PC-3 (cell line): ENCODE measurements at regions of chr11 and their contacts with region 1.

Region 1: DNA sequence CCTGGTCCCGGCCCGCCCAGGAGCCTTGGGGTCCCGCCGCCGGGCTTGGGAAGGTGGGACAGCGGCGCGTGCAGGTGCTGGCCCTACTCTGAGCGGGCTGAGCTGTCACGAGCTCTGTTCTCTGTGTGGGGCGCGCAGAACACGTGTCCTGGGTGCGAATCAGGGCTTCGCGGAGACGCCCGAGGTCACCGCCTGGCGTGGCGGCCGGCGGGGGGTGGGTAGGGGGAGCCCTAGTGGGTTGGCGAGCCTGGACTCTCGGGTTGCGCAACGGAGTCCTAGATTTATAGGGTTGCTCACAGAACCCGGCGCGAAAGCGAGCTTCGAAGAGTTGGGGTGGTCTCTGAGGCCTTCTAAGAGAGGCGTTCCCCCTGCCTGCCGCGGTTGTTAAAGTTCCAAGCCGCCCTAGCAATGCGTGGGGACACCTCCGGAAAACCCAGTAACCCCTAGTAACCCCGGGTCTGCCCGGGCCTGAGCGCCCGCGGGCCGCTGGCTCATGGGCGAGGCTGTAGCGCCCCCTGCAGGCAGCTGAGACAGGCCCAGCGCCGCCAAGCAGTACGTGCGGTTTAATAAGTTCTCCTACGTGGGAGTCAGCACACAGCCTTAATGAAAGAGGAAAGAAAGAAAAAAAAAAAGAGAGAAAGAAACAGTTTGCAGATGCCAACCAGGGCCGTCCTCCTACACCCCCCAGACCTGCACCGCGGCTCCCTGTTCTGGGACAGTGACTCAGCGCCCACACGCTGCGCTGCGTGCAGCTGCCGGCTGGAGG is 2.8 kb downstream of the ADM start:
- DNase-seq: peak; percentile 86
- ATAC-seq: peak; percentile 21
- H3K4me3 ChIP-seq: peak overlapping the region; percentile 93
- H3K27ac ChIP-seq: peak overlapping the region; percentile 89
- H3K4me1 ChIP-seq: peaks cover 21% of the 10 kb centered on the region
- H3K27me3 ChIP-seq: no peaks in the 10 kb centered on the region
- CTCF ChIP-seq: peak; percentile 98

Region 2: GRCh38 chr11:9757809-9758636 is 549.6 kb before region 1 on chr11:
- CTCF ChIA-PET with region 1: no interaction called
- POLR2A ChIA-PET with region 1: no interaction called
- intact Hi-C with region 1: loop called (anchors 1 kb)
- DNase-seq: peak; percentile 76
- ATAC-seq: peak; percentile 39
- H3K4me3 ChIP-seq: peak overlapping the region; percentile 87
- H3K27ac ChIP-seq: peak overlapping the region; percentile 17; the same call in 1 of the 2 replicates
- H3K4me1 ChIP-seq: peaks cover 42% of the 10 kb centered on the region
- H3K27me3 ChIP-seq: no peaks in the 10 kb centered on the region
- CTCF ChIP-seq: peak; percentile 66

Region 3: DNA sequence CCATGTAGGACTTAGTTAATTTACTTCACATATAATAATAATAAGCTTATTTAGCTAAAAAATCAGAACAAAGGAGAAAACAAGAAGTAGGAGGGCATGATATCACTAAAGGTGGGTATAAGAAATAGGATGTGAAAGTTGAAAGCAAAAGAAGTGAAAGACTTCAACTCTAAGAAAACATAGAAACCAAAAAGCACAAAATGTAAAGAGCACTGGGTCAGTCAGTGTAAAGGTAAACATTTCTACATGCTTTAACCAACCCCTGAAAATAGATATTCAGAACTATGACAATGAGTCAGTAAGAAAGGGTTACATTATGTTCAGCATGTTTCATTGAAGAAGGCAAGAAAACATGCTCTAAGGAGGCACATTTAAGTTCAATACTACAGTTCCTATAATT is 344.9 kb before region 1 on chr11:
- CTCF ChIA-PET with region 1: no interaction called
- POLR2A ChIA-PET with region 1: no interaction called
- intact Hi-C with region 1: no loop called
- DNase-seq: no peak
- ATAC-seq: no peak
- H3K4me3 ChIP-seq: no peak overlapping the region
- H3K27ac ChIP-seq: no peak overlapping the region
- H3K4me1 ChIP-seq: no peaks in the 10 kb centered on the region
- H3K27me3 ChIP-seq: no peaks in the 10 kb centered on the region
- CTCF ChIP-seq: no peak

Region 4: DNA sequence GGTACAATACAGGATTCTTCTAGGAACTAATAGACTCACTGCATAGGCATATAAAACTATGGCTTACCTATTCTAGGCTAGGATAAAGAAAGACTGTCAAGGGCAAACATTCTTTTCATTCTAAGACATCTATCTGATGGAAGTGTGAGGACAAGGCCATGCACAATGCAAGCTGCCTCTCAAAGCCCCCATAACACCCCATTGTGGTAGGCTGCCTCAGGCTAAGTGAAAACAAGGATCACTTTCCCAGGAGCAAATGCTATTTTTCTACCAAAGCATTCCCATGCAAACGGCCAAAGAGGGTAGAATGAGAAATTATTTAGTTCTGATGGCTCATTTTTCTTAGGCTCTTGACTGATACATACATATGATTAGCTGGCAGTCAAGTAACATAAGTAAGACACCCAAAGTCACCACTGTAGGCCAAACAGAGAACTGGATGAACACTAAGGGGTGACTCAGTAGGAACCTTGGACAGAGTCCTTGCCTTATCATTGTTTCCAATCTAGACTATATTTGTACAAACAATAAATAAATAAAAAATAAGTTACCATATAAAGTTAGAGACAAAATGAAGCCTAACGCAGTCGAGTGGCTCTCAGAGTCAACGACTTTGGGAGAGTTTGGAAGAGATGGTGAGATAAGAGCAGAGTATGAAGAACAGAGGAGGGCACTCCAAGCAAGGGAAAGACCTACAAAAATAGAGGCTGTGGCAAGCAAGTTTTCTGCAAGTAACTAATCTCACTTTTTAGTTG is 317.2 kb before region 1 on chr11:
- CTCF ChIA-PET with region 1: interaction called, 5 read pairs
- POLR2A ChIA-PET with region 1: interaction called, 4 read pairs
- intact Hi-C with region 1: loop called (anchors 1 kb)
- DNase-seq: peak; percentile 71
- ATAC-seq: peak; percentile 98
- H3K4me3 ChIP-seq: no peak overlapping the region
- H3K27ac ChIP-seq: 0 out of 2 replicates have a peak overlapping the region, but pooled peaks have one; percentile 5
- H3K4me1 ChIP-seq: peaks cover 14% of the 10 kb centered on the region
- H3K27me3 ChIP-seq: no peaks in the 10 kb centered on the region
- CTCF ChIP-seq: peak; percentile 45

Region 5: GRCh38 chr11:10116588-10116987 is 191.0 kb before region 1 on chr11:
- CTCF ChIA-PET with region 1: no interaction called
- POLR2A ChIA-PET with region 1: interaction called, 19 read pairs
- intact Hi-C with region 1: no loop called
- DNase-seq: no peak
- ATAC-seq: no peak
- H3K4me3 ChIP-seq: no peak overlapping the region
- H3K27ac ChIP-seq: no peak overlapping the region
- H3K4me1 ChIP-seq: peaks cover 12% of the 10 kb centered on the region; the same call in 1 of the 2 replicates
- H3K27me3 ChIP-seq: no peaks in the 10 kb centered on the region
- CTCF ChIP-seq: no peak

Region 6: DNA sequence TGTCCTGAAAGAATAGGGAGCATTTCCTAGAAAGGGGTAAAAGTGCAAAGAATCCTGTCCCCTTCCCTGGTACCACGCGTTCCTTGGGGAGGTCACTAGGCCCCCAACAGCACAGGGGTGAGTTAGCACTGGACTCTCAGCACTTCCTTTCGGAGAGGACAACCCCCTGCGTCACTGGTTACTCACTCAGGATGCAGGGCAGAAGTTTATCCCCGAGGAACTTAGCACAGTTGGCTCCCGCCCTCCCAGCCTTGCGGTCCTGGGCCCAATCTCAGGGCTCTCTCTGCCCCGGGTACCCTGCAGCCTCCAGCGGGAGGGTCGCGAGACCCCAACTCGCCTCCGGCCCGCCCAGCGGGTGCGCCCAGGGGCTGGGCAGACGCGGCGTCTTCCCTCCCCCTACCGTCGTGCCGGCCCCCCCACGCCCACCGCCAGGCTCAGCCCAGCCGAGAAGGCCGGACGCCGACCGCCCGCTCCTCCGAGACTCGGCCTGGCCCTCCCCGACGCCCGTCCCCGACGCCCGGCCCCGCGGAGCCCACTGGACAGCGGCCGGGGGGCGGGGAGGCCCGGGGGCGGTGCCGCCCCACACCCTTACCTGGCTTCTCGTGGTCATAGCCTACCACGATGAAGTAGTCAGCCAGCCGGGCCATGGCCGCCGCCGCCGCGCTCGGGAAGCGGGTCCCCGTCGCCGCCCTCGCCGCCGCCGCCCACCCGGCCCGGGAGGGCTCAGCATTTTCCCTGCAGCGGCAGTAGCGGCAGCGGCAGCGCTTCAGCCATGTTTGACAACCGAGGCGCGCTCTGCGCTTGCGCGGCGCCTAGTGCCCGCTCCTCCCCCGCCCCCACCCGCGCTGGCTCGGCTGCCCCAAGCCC is 14.0 kb before region 1 on chr11 and contains the start of gene SBF2:
- CTCF ChIA-PET with region 1: no interaction called
- POLR2A ChIA-PET with region 1: interaction called, 19 read pairs
- intact Hi-C with region 1: loop called (anchors 1 kb)
- DNase-seq: peak; percentile 89
- ATAC-seq: peak; percentile 88
- H3K4me3 ChIP-seq: peak within 1 kb of the TSS; percentile 88
- H3K27ac ChIP-seq: peak within 1 kb of the TSS; percentile 92
- H3K4me1 ChIP-seq: peaks cover 32% of the 10 kb centered on the region
- H3K27me3 ChIP-seq: no peaks in the 10 kb centered on the region
- CTCF ChIP-seq: no peak
- total RNA-seq, gene SBF2: 30.3 and 31.3 TPM in 2 replicates

Region 7: DNA sequence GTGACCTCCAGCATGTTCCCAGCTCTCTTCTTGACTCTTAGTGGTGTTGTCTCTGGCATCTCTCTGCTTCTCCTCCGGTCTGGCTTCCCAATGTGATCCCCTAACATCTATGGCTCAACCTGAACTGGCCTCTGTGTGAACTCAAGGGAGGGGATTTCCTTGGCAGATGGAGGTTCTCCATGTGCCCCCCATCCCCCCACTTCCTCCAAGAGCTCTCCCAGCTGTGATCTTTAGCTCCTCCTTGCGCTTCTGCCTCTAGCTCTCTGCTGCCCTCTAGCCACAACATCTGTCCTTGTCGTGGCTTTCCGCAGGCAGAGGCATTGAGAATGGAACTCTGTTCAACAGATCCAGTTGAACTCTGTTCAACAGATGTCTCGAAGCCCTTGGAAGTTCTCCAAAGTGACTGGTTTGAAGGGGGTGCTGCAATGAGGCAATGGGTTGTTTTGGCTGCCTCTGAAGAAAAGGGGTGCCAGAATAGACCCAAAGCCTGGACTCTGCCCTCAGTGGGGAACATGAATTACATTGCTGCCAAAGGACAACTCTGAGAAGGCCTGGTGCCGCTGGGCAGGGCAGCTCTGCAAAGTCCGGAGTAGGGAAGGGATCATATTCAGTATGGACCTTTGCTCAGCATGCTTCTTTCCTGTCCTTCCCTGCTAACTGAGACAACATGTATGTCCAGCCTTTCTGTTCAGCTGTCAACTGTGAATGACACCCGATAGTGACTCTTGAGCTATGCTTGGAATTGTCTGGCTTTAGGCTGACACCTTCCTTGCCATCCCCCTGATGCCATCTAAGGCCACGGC is 59.1 kb after region 1 on chr11:
- CTCF ChIA-PET with region 1: interaction called, 5 read pairs
- POLR2A ChIA-PET with region 1: no interaction called
- intact Hi-C with region 1: loop called (anchors 5 kb)
- DNase-seq: peak; percentile 85
- ATAC-seq: peak; percentile 87
- H3K4me3 ChIP-seq: no peak overlapping the region
- H3K27ac ChIP-seq: no peak overlapping the region
- H3K4me1 ChIP-seq: peaks cover 6% of the 10 kb centered on the region
- H3K27me3 ChIP-seq: no peaks in the 10 kb centered on the region
- CTCF ChIP-seq: peak; percentile 88

Region 8: DNA sequence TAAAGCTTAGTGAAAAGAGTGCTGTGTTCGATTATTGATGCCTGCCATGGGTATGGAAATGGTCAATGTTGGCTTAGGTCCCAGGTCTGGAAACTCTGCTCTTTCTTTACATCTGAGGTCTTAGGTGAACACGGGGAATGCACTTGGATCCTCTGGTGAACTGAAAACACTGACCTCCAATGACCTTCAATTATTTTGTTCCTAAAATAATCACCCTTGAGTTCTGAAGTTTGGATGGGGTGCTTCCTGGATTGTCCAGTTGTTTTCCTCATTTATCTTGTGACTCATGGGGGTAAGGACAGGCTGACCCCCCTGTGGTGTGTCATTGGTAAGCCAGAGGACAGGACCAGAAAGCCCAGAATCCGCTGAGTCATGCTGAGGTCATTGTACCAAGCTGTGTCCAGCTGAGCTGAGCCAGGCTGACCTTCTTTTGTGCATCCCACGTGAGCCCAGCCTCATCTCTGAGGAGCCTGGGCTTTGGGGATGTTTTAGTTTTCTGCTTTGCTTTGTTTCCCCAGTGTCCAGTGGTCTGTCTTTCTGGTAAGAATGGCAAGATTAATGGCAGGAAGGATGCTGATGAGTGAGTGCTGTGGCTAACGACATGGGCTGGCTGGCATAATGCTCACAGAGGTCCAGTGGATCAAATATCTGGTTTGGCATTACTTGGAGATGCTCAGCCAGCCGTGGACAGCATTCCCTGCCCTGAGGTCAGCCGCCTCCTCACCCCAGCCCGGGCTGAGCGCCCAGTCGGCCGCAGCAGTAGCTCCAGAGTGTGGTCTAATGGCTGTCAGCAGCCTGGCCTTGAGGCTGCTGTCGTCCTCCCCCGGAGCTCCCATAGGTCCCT is 183.0 kb after region 1 on chr11:
- CTCF ChIA-PET with region 1: no interaction called
- POLR2A ChIA-PET with region 1: no interaction called
- intact Hi-C with region 1: no loop called
- DNase-seq: peak; percentile 97
- ATAC-seq: peak; percentile 82
- H3K4me3 ChIP-seq: no peak overlapping the region
- H3K27ac ChIP-seq: peak overlapping the region; percentile 79
- H3K4me1 ChIP-seq: peaks cover 43% of the 10 kb centered on the region
- H3K27me3 ChIP-seq: no peaks in the 10 kb centered on the region
- CTCF ChIP-seq: no peak